CD8-positive, alpha-beta T cell (primary cell): ENCODE measurements at regions of chr17 and their contacts with region 1.

Region 1: DNA sequence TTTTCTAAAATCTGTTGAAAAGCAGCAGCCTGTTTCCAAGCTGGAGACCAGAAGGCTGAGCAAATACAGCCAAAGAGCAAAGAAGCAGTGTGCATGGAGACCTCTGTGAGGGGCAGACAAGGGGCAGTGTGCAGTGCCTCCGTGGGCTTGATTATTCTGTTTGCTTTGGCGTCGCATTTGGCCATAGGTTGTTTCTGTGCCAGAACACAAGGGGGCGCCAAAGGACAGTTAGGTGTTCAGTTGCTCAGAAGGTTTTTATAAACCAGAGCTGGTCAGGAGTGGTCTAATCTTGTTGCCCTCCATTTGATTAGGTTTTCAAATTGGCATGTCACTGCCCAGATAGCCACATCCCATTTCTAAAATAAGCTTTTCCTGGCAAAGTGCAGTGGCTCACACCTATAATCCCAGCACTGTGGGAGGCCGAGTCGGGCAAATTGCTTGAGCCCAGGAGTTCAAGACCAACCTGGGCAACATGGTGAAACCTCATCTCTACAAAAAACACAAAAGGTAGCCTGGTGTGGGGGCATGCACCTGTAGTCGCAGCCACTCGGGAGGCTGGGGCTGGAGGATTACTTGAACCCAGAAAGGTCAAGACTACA is 10.6 kb downstream of the MYH3 start:
- DNase-seq: peak; percentile 53 to 86 (median 75)
- ATAC-seq: peak; percentile 40
- H3K4me3 ChIP-seq: no peak overlapping the region
- H3K4me3 Mint-ChIP-seq: no peak overlapping the region
- H3K27ac ChIP-seq: no peak overlapping the region
- H3K27ac Mint-ChIP-seq: no peak overlapping the region
- H3K4me1 ChIP-seq: no peaks in the 10 kb centered on the region
- H3K4me1 Mint-ChIP-seq: peaks cover 3% of the 10 kb centered on the region
- H3K27me3 ChIP-seq: no peaks in the 10 kb centered on the region
- H3K27me3 Mint-ChIP-seq: no peaks in the 10 kb centered on the region
- CTCF ChIP-seq: peak; percentile 89

Region 2: GRCh38 chr17:10618202-10618635 is 28.3 kb before region 1 on chr17:
- CTCF ChIA-PET with region 1: interaction called, 33 read pairs
- POLR2A ChIA-PET with region 1: no interaction called
- intact Hi-C with region 1: no loop called
- DNase-seq: peak; percentile 21 to 72 (median 50)
- ATAC-seq: peak; percentile 79
- H3K4me3 ChIP-seq: no peak overlapping the region
- H3K4me3 Mint-ChIP-seq: no peak overlapping the region
- H3K27ac ChIP-seq: no peak overlapping the region
- H3K27ac Mint-ChIP-seq: no peak overlapping the region
- H3K4me1 ChIP-seq: no peaks in the 10 kb centered on the region
- H3K4me1 Mint-ChIP-seq: no peaks in the 10 kb centered on the region
- H3K27me3 ChIP-seq: no peaks in the 10 kb centered on the region
- H3K27me3 Mint-ChIP-seq: peaks cover 5% of the 10 kb centered on the region
- CTCF ChIP-seq: peak; percentile 73

Region 3: GRCh38 chr17:10657148-10657547 is 10.7 kb after region 1 on chr17 and contains the start of gene MYH3:
- CTCF ChIA-PET with region 1: interaction called, 15 read pairs
- POLR2A ChIA-PET with region 1: no interaction called
- intact Hi-C with region 1: no loop called
- DNase-seq: no peak
- ATAC-seq: no peak
- H3K4me3 ChIP-seq: no peak within 1 kb of the TSS
- H3K4me3 Mint-ChIP-seq: no peak within 1 kb of the TSS
- H3K27ac ChIP-seq: no peak within 1 kb of the TSS
- H3K27ac Mint-ChIP-seq: no peak within 1 kb of the TSS
- H3K4me1 ChIP-seq: peaks cover 9% of the 10 kb centered on the region
- H3K4me1 Mint-ChIP-seq: peaks cover 11% of the 10 kb centered on the region
- H3K27me3 ChIP-seq: no peaks in the 10 kb centered on the region
- H3K27me3 Mint-ChIP-seq: no peaks in the 10 kb centered on the region
- CTCF ChIP-seq: no peak
- total RNA-seq, gene MYH3: 2.5 to 3.2 TPM

Region 4: GRCh38 chr17:10673312-10673711 is 26.8 kb after region 1 on chr17:
- CTCF ChIA-PET with region 1: interaction called, 10 read pairs
- POLR2A ChIA-PET with region 1: no interaction called
- intact Hi-C with region 1: no loop called
- DNase-seq: no peak
- ATAC-seq: no peak
- H3K4me3 ChIP-seq: no peak overlapping the region
- H3K4me3 Mint-ChIP-seq: no peak overlapping the region
- H3K27ac ChIP-seq: no peak overlapping the region
- H3K27ac Mint-ChIP-seq: no peak overlapping the region
- H3K4me1 ChIP-seq: no peaks in the 10 kb centered on the region
- H3K4me1 Mint-ChIP-seq: no peaks in the 10 kb centered on the region
- H3K27me3 ChIP-seq: no peaks in the 10 kb centered on the region
- H3K27me3 Mint-ChIP-seq: no peaks in the 10 kb centered on the region
- CTCF ChIP-seq: no peak

Region 5: DNA sequence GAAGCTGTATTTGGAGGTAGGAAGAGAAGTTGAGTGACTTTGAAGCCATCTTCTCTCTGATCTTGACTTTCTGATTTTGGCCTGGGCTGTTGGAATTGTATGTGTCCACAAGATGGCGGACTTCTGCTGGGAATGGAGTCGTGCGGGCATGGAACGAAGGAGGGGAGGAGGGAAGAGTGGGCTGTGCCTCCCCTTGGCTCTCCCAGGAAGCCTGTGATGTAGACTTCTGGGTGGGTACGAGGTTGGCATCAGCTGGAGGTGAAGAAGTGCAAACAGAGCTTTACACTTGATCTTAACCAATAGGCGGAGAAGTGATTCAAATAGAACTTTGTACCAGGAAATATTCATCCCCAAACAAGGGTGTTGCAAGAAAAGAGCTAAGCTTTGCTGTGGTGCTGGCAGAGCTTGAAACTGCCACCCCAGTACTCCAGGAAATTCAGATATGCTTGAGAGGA is 90.7 kb after region 1 on chr17:
- CTCF ChIA-PET with region 1: interaction called, 14 read pairs
- POLR2A ChIA-PET with region 1: no interaction called
- intact Hi-C with region 1: loop called in 1 of 2 experiments (anchors 5 kb)
- DNase-seq: peak in 5 of 9 experiments; percentile 7 to 60 (median 35)
- ATAC-seq: peak; percentile 51
- H3K4me3 ChIP-seq: no peak overlapping the region
- H3K4me3 Mint-ChIP-seq: peak overlapping the region; percentile 29
- H3K27ac ChIP-seq: no peak overlapping the region
- H3K27ac Mint-ChIP-seq: no peak overlapping the region
- H3K4me1 ChIP-seq: peaks cover 6% of the 10 kb centered on the region
- H3K4me1 Mint-ChIP-seq: peaks cover 11% of the 10 kb centered on the region
- H3K27me3 ChIP-seq: no peaks in the 10 kb centered on the region
- H3K27me3 Mint-ChIP-seq: peaks cover 4% of the 10 kb centered on the region
- CTCF ChIP-seq: peak; percentile 46

Region 6: GRCh38 chr17:10836966-10837590 is 190.6 kb after region 1 on chr17:
- CTCF ChIA-PET with region 1: interaction called, 15 read pairs
- POLR2A ChIA-PET with region 1: no interaction called
- intact Hi-C with region 1: no loop called
- DNase-seq: no peak
- ATAC-seq: no peak
- H3K4me3 ChIP-seq: no peak overlapping the region
- H3K4me3 Mint-ChIP-seq: no peak overlapping the region
- H3K27ac ChIP-seq: no peak overlapping the region
- H3K27ac Mint-ChIP-seq: no peak overlapping the region
- H3K4me1 ChIP-seq: no peaks in the 10 kb centered on the region
- H3K4me1 Mint-ChIP-seq: no peaks in the 10 kb centered on the region
- H3K27me3 ChIP-seq: no peaks in the 10 kb centered on the region
- H3K27me3 Mint-ChIP-seq: no peaks in the 10 kb centered on the region
- CTCF ChIP-seq: no peak

Region 7: DNA sequence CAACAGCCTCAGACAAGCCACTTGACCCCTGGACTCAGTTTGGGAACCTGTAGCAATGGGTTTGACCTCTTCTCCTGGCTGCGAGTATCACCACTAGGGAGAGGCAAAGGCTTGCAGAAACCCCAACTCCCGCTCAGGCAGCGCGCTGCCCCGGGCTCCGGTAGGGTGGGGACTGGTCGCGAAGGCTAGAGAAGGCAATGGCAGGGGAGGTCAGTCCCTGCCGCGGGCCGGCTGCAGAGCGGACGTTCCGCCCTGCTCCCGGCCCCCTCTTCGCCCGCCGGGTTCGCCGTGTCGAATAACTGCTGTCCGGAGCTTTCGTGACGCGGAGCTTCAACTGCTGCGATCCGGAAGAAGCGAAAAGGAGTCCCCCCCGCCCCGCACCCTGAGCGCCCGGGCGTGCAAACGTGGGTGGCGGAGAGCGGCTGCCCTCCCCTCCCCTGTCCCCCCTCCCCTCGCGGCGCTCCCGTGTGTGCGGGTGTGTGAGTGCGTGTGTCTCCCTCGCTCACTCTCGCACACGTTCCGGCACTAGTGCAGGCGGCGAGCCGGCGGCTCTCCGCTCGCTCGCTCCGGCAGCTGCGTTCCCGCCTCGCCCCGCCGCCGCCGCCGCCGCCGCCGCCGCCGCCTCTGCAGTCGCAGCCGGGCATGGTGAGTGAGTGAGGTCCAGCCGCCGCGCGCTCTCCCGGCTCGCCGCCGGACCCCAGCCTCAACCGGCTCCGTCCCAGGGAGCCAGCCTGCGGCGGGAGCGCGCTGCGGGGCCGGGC is 593.7 kb after region 1 on chr17:
- CTCF ChIA-PET with region 1: no interaction called
- POLR2A ChIA-PET with region 1: no interaction called
- intact Hi-C with region 1: no loop called
- DNase-seq: no peak
- ATAC-seq: no peak
- H3K4me3 ChIP-seq: no peak overlapping the region
- H3K4me3 Mint-ChIP-seq: no peak overlapping the region
- H3K27ac ChIP-seq: no peak overlapping the region
- H3K27ac Mint-ChIP-seq: no peak overlapping the region
- H3K4me1 ChIP-seq: no peaks in the 10 kb centered on the region
- H3K4me1 Mint-ChIP-seq: peaks cover 3% of the 10 kb centered on the region
- H3K27me3 ChIP-seq: no peaks in the 10 kb centered on the region
- H3K27me3 Mint-ChIP-seq: peaks cover 40% of the 10 kb centered on the region
- CTCF ChIP-seq: no peak

Region 8: DNA sequence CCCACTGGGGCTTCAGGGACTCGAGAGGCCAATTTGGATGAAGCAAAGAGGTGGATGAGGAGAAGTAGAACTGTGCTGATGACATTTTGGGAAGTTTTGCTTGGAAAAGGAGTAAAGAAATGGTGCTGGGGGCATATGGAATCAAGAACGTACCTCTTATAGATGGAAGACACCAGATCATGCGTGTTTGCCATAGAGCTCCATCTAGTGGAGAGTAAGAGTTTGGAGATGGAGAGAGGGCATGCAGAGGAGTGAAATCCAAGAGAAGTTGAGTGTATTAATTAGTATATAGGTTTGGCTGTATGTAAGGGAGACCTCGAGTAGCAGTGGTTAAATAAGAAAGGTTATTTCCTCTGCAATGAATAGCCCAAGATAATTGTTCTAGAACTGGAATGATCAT is 650.5 kb after region 1 on chr17:
- CTCF ChIA-PET with region 1: no interaction called
- POLR2A ChIA-PET with region 1: no interaction called
- intact Hi-C with region 1: loop called in 1 of 2 experiments (anchors 10 kb)
- DNase-seq: no peak
- ATAC-seq: no peak
- H3K4me3 ChIP-seq: no peak overlapping the region
- H3K4me3 Mint-ChIP-seq: no peak overlapping the region
- H3K27ac ChIP-seq: no peak overlapping the region
- H3K27ac Mint-ChIP-seq: no peak overlapping the region
- H3K4me1 ChIP-seq: no peaks in the 10 kb centered on the region
- H3K4me1 Mint-ChIP-seq: no peaks in the 10 kb centered on the region
- H3K27me3 ChIP-seq: no peaks in the 10 kb centered on the region
- H3K27me3 Mint-ChIP-seq: no peaks in the 10 kb centered on the region
- CTCF ChIP-seq: no peak